MCF 10A (cell line): ENCODE measurements at regions of chr5 and their contacts with region 1.

Region 1: DNA sequence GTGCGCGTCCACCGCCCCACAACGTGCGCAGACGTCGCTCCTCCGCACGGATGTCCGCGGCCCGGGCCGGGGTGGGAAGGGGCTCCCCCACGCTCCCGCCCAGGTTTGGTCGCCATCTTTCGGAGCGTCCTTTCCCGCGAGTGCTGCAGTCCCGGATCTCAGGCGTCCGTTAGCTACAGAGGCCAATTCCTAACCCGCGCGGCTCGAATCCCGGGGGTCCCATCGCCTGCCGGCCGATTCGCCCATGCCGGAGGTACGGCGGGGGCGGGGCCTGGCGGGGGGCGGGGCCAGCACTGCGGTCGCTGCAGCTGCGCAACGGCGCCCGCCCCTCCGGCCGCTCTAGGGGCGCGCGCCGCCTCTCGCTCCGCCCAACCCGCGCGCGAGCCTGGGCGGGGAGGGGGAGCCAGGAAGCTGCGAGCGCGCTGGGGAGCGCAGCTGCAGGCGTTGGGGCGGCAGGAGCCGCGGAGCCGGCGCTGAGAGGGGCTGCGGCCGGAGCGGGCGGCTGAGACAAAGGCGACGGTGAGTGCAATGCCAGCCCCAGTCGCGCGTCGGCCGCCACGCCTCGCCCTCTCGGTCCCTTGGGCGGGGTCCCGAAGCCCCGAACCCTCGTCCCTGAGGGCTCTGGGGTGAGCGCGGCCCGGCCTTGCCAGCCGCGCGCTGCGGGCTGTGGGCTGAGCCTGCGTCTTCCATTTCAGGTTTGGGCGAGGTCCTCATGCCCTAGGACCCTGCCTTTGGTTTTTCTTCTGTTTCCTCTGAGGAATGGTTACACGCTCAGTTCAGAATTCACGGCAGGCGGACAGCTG is at the start of gene CDC42SE2:
- DNase-seq: peak; percentile 93
- H3K4me3 Mint-ChIP-seq: peak within 1 kb of the TSS; percentile 92
- H3K27ac Mint-ChIP-seq: peak within 1 kb of the TSS; percentile 89
- H3K4me1 Mint-ChIP-seq: peaks cover 31% of the 10 kb centered on the region
- H3K27me3 Mint-ChIP-seq: no peaks in the 10 kb centered on the region
- CTCF ChIP-seq: no peak
- total RNA-seq, gene CDC42SE2: 71.0 and 96.4 TPM in 2 replicates

Region 2: DNA sequence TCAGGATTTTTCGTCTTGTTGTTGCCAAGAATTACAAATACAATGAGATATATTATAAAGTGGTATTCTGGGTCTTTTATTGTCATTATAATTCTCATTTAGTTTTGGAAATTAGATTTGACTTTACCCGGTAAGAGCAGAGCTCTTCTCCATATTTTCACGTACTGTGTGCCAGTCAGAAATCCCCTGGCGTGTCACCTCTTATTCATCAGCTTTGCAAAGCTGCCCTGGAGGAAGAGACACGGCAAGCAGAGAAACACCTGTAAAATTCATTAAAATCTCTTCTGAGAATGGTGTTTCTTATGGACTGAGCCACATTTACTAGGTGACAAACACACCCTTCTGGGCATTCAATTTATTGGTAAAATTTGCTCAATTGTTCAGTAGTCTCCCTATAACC is 539.2 kb before region 1 on chr5:
- CTCF ChIA-PET with region 1: no interaction called
- POLR2A ChIA-PET with region 1: no interaction called
- intact Hi-C with region 1: no loop called
- DNase-seq: peak; percentile 13
- H3K4me3 Mint-ChIP-seq: no peak overlapping the region
- H3K27ac Mint-ChIP-seq: no peak overlapping the region
- H3K4me1 Mint-ChIP-seq: no peaks in the 10 kb centered on the region
- H3K27me3 Mint-ChIP-seq: no peaks in the 10 kb centered on the region
- CTCF ChIP-seq: no peak

Region 3: DNA sequence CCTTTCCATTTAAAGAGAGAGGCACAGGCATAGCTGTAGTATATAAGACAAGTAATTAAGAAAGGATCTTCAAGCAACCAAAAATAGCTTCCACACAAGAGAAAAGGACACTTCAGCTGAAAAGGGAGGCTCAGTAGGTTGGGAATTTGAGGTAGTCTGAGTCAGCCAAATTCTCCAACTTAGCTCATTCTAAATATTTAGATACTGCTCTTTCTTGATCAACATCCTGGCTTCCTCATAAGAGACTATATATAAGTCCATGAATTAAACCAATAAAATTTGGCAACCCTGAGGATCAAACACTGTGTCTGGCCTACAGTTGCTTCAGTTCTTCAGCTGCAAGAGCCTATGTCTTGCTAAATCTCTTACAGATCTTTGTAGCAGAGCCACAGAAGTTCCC is 116.6 kb before region 1 on chr5:
- CTCF ChIA-PET with region 1: no interaction called
- POLR2A ChIA-PET with region 1: no interaction called
- intact Hi-C with region 1: no loop called
- DNase-seq: no peak
- H3K4me3 Mint-ChIP-seq: no peak overlapping the region
- H3K27ac Mint-ChIP-seq: no peak overlapping the region
- H3K4me1 Mint-ChIP-seq: no peaks in the 10 kb centered on the region
- H3K27me3 Mint-ChIP-seq: no peaks in the 10 kb centered on the region
- CTCF ChIP-seq: no peak

Region 4: GRCh38 chr5:131218392-131218791 is 45.5 kb before region 1 on chr5:
- CTCF ChIA-PET with region 1: interaction called, 7 read pairs
- POLR2A ChIA-PET with region 1: interaction called, 66 read pairs
- intact Hi-C with region 1: no loop called
- DNase-seq: peak; percentile 29
- H3K4me3 Mint-ChIP-seq: no peak overlapping the region
- H3K27ac Mint-ChIP-seq: peak overlapping the region; percentile 24
- H3K4me1 Mint-ChIP-seq: peaks cover 11% of the 10 kb centered on the region
- H3K27me3 Mint-ChIP-seq: no peaks in the 10 kb centered on the region
- CTCF ChIP-seq: no peak

Region 5: DNA sequence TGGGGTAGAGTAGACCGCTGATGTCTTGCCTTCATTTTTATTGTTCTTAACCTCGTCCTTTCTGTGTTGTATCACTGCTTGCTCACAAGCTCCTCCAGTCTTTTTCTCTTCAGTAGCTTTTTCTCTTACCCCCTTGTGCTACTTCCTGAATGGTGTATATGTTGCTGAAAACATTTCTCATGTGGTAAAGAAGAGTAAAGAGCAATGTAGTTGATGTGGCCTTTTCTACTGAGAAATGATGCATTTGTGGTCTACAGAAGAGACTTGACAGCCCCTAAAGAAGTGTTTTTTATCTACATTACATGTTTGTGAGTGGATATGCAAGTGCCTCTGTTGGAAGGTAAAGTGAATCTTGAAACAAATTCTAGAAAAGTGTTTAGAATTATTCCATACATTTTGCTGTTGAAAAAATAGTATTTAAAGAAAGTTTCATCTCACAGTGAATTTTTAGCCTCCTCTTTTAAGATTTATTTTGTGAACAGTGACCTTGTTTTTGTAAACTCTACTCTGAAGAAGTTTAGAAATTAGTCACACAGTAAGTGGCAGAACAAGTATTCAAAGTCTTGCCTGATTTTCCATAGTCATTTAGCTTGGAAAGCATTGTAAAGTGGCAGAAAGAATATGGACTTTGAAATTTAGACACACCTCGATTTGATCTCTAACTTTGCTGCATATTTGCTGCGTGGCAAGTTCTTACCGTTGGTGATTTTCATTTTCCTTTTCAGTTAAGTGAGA is 17.5 kb after region 1 on chr5:
- CTCF ChIA-PET with region 1: interaction called, 11 read pairs
- POLR2A ChIA-PET with region 1: interaction called, 279 read pairs
- intact Hi-C with region 1: no loop called
- DNase-seq: peak; percentile 34
- H3K4me3 Mint-ChIP-seq: peak overlapping the region; percentile 51
- H3K27ac Mint-ChIP-seq: peak overlapping the region; percentile 84
- H3K4me1 Mint-ChIP-seq: peaks cover 33% of the 10 kb centered on the region
- H3K27me3 Mint-ChIP-seq: no peaks in the 10 kb centered on the region
- CTCF ChIP-seq: no peak

Region 6: GRCh38 chr5:131303537-131303936 is 39.7 kb after region 1 on chr5:
- CTCF ChIA-PET with region 1: interaction called, 9 read pairs
- POLR2A ChIA-PET with region 1: interaction called, 110 read pairs
- intact Hi-C with region 1: loop called (anchors 1 kb)
- DNase-seq: peak; percentile 83
- H3K4me3 Mint-ChIP-seq: peak overlapping the region; percentile 10
- H3K27ac Mint-ChIP-seq: peak overlapping the region; percentile 97
- H3K4me1 Mint-ChIP-seq: peaks cover 67% of the 10 kb centered on the region
- H3K27me3 Mint-ChIP-seq: no peaks in the 10 kb centered on the region
- CTCF ChIP-seq: no peak

Region 7: DNA sequence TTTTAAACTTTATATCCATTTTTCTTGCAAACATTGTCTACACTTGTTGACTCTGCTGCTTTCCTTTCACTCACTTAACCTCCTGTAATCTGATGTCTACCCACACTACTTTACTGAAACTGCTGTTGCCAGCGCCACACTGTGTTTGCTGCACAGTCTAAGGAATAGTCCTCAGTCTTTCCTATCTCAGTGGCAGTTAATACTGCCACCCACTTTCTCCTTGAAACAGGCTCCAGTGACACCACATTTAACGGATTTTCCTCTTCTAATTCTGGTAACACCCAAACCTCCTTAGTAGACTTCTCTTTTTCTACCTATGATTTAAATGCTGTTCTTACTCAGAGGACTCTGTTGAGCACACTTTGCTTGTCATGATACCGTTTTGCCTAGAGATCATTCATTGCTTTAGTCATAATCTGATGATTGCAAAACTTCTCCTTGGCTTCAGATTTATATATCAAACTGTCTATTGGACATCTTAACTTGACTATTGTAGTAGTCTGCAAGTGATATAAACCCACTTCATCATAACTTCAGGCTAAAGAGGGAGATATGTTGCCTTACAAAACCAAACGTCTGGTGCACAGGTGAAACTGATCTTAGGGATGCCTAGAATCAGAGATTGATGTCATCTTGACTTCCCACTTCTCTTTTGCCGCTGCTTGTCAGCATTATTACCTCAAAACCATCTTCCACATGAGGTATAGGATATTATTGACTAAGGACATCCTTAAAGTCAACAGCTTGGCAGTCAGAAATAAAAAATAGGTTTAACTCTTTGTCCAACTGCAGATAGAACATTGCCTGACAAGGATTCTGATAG is 94.1 kb after region 1 on chr5:
- CTCF ChIA-PET with region 1: interaction called, 6 read pairs
- POLR2A ChIA-PET with region 1: interaction called, 20 read pairs
- intact Hi-C with region 1: no loop called
- DNase-seq: no peak
- H3K4me3 Mint-ChIP-seq: no peak overlapping the region
- H3K27ac Mint-ChIP-seq: no peak overlapping the region
- H3K4me1 Mint-ChIP-seq: peaks cover 28% of the 10 kb centered on the region
- H3K27me3 Mint-ChIP-seq: no peaks in the 10 kb centered on the region
- CTCF ChIP-seq: no peak